ENCODE measurements at regions of chr12 and their contacts with region 1.

Region 1: GRCh38 chr12:57111031-57111734 is at the start of gene STAT6:
- DNase-seq: peak; percentile 64
- ATAC-seq: peak; percentile 58
- H3K4me3 Mint-ChIP-seq: peak within 1 kb of the TSS; percentile 100
- H3K27ac Mint-ChIP-seq: peak within 1 kb of the TSS; percentile 98
- H3K4me1 Mint-ChIP-seq: peaks cover 46% of the 10 kb centered on the region
- H3K27me3 Mint-ChIP-seq: no peaks in the 10 kb centered on the region
- CTCF ChIP-seq: no peak
- total RNA-seq, gene STAT6: 635 and 745 TPM in 2 replicates

Region 2: GRCh38 chr12:56636675-56637540 is 474.3 kb before region 1 on chr12:
- CTCF ChIA-PET with region 1: interaction called, 5 read pairs
- POLR2A ChIA-PET with region 1: interaction called, 20 read pairs
- intact Hi-C with region 1: loop called (anchors 1 kb)
- DNase-seq: peak; percentile 95
- ATAC-seq: peak; percentile 64
- H3K4me3 Mint-ChIP-seq: peak overlapping the region; percentile 96
- H3K27ac Mint-ChIP-seq: peak overlapping the region; percentile 97
- H3K4me1 Mint-ChIP-seq: peaks cover 64% of the 10 kb centered on the region
- H3K27me3 Mint-ChIP-seq: no peaks in the 10 kb centered on the region
- CTCF ChIP-seq: no peak

Region 3: DNA sequence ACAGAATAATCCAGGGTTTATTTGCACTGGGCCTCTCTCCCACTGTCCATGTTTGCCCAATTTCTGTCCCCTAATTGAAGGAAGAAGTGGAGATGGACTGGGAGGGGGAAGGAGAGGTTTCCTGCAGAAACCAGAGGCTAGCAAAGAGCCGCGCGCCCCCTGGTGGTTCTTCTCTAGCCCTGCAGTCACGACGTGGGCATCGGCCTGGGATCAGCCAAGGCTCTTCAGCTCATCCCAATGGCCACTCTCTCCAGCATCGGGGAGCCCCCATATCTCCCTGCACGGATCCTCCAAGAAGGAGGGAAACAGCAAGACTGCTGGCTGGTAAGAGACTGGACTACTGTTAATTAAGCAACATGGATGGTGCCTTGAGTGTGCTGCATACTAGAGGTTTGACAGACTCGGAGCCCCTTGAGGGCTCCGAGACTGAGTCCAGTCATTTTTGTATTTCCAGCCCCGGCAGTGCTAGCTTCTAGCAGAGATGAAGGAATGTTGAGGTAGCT is 123.6 kb before region 1 on chr12:
- CTCF ChIA-PET with region 1: interaction called, 3 read pairs
- POLR2A ChIA-PET with region 1: interaction called, 4 read pairs
- intact Hi-C with region 1: loop called (anchors 1 kb)
- DNase-seq: peak; percentile 66
- ATAC-seq: peak; percentile 96
- H3K4me3 Mint-ChIP-seq: peak overlapping the region; percentile 35
- H3K27ac Mint-ChIP-seq: no peak overlapping the region
- H3K4me1 Mint-ChIP-seq: peaks cover 12% of the 10 kb centered on the region
- H3K27me3 Mint-ChIP-seq: peaks cover 6% of the 10 kb centered on the region
- CTCF ChIP-seq: peak; percentile 89

Region 4: GRCh38 chr12:57069523-57069922 is 41.7 kb before region 1 on chr12:
- CTCF ChIA-PET with region 1: interaction called, 368 read pairs
- POLR2A ChIA-PET with region 1: interaction called, 359 read pairs
- intact Hi-C with region 1: loop called (anchors 1 kb)
- DNase-seq: peak; percentile 16
- ATAC-seq: peak; percentile 99
- H3K4me3 Mint-ChIP-seq: peak overlapping the region; percentile 17
- H3K27ac Mint-ChIP-seq: peak overlapping the region; percentile 79
- H3K4me1 Mint-ChIP-seq: peaks cover 33% of the 10 kb centered on the region
- H3K27me3 Mint-ChIP-seq: no peaks in the 10 kb centered on the region
- CTCF ChIP-seq: peak; percentile 44

Region 5: GRCh38 chr12:57124259-57124877 is 13.2 kb after region 1 on chr12:
- CTCF ChIA-PET with region 1: interaction called, 19 read pairs
- POLR2A ChIA-PET with region 1: interaction called, 46 read pairs
- intact Hi-C with region 1: loop called (anchors 1 kb)
- DNase-seq: peak; percentile 31
- ATAC-seq: peak; percentile 72
- H3K4me3 Mint-ChIP-seq: no peak overlapping the region
- H3K27ac Mint-ChIP-seq: no peak overlapping the region
- H3K4me1 Mint-ChIP-seq: peaks cover 5% of the 10 kb centered on the region
- H3K27me3 Mint-ChIP-seq: no peaks in the 10 kb centered on the region
- CTCF ChIP-seq: no peak

Region 6: GRCh38 chr12:57205933-57206330 is 94.7 kb after region 1 on chr12:
- CTCF ChIA-PET with region 1: no interaction called
- POLR2A ChIA-PET with region 1: no interaction called
- intact Hi-C with region 1: no loop called
- DNase-seq: no peak
- ATAC-seq: no peak
- H3K4me3 Mint-ChIP-seq: no peak overlapping the region
- H3K27ac Mint-ChIP-seq: no peak overlapping the region
- H3K4me1 Mint-ChIP-seq: no peaks in the 10 kb centered on the region
- H3K27me3 Mint-ChIP-seq: peaks cover 2% of the 10 kb centered on the region
- CTCF ChIP-seq: no peak

Region 7: DNA sequence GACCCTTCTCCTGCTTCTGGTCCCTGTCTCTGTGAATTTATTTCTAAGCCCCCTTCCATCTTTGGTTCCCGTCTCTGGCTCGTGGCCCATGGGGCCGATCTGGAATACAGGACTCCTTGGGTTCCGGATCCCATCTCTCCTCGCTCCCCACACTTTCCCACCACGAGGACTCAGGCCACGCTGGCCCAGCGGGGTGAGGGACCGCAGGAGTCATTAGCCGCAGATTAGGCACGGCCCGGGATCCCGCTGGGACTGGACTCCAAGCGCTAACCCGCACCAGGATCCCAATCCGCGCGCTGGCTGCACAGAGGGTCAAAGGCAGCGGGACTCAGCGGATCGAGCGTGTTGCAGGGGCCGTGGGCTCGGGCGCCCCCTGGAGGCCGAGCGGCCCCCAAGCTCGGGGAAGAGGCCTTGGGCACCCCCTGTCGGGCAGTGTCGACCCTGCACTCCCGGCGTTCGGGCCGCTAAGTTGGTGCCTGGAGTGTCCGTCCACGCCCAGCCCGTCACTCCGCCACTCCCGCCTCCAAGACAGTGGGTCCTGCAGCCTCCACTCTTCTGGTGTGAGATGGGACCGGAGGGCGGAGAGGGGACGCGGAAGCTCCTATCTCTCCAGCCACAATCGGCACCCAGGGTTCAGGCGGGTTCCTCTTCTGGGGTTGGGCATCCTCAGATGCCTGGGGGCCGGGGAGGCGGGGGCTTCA is 127.8 kb after region 1 on chr12:
- CTCF ChIA-PET with region 1: no interaction called
- POLR2A ChIA-PET with region 1: interaction called, 24 read pairs
- intact Hi-C with region 1: no loop called
- DNase-seq: peak; percentile 96
- ATAC-seq: peak; percentile 54
- H3K4me3 Mint-ChIP-seq: peak overlapping the region; percentile 89
- H3K27ac Mint-ChIP-seq: peak overlapping the region; percentile 90
- H3K4me1 Mint-ChIP-seq: peaks cover 94% of the 10 kb centered on the region
- H3K27me3 Mint-ChIP-seq: peaks cover 8% of the 10 kb centered on the region
- CTCF ChIP-seq: peak; percentile 99

Region 8: DNA sequence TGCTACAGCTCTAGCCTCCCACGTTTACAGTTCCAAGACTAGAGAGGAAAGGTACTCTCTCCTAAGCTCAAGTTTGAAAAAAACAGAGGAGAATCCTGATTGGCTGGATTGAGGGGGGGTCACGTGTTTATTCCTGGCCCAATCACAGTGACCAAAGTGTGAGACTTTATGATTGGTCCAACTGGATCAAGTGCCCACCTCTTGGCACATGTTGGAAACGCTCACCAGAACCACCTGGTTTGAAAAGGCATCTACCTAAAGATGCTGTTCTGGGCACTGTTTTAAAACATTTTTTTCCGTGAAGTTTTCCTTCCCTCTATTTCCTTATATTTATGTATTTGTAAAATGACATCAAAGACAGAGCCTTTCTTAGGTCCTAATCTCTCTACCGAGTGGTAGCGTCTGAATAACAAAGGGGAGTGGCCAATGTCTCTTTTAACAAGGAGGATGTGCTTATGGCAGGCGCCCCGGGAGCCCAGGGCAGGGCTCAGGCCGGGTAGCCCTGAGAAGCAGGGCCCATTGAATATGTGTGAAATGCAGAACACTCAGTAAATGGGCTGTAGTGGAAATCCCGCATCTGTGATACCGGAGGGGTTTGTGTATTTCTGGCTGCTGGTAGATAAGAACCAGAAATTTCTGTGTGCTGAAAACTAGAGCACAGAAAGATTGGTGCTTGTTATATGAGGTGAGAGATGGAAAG is 976.4 kb after region 1 on chr12:
- CTCF ChIA-PET with region 1: no interaction called
- POLR2A ChIA-PET with region 1: no interaction called
- intact Hi-C with region 1: no loop called
- DNase-seq: no peak
- ATAC-seq: no peak
- H3K4me3 Mint-ChIP-seq: no peak overlapping the region
- H3K27ac Mint-ChIP-seq: no peak overlapping the region
- H3K4me1 Mint-ChIP-seq: no peaks in the 10 kb centered on the region
- H3K27me3 Mint-ChIP-seq: peaks cover 2% of the 10 kb centered on the region
- CTCF ChIP-seq: no peak